Activated B cell treated with CpG ODN at 0.5 μM for 24 hours (primary cell): ENCODE measurements at regions of chr13 and their contacts with region 1.

Region 1: DNA sequence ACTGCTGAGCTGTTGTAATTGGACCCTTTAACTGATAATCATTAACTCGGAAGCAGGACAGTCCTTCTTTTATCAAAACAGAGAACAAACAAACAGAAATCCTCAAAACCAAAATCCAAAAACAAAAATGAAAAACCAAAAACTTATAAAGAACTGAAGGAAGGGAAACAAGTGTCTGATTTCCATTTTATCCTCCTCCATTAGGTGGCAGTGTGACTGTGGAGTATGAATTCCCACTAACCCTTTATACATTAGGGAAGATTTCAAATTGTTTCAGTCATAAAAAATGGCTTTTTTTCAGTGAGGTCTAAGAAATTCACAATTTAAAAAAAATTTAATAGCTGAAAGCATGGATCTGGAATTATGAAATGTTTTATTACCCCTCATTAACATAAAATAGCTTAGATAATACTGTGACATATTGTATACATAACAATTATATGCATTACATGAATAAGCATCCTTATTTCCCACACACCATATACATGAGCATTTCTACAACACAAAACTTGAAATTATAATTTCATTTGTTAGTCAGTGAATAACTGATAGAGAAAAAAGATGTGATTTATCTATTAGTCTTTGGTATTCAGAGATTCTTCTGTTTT is 1074.3 kb upstream of the PCDH9 start:
- DNase-seq: no peak
- ATAC-seq: no peak
- H3K4me3 Mint-ChIP-seq: no peak overlapping the region
- H3K27ac Mint-ChIP-seq: no peak overlapping the region
- H3K4me1 Mint-ChIP-seq: no peaks in the 10 kb centered on the region
- H3K27me3 Mint-ChIP-seq: no peaks in the 10 kb centered on the region
- CTCF ChIP-seq: no peak

Region 2: DNA sequence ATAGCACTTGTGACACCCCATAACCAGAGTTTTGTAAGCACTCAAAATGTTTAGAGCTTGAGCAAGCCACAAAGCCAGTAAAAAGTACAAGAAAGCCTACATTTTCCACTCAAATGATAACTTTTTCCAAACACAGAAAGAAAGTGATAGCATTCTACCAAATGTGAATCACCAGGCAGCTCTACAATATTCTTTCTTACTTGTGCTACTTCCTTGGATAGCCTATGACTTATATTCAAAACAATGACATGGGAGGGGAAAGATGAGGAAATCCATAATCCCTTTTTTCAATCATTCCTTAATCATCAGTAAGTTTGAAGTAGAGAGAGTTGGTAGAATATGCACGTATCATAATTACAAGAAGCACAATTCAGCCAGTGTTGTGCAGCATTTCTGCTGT is 423.5 kb before region 1 on chr13:
- CTCF ChIA-PET with region 1: no interaction called
- POLR2A ChIA-PET with region 1: no interaction called
- intact Hi-C with region 1: no loop called
- DNase-seq: no peak
- ATAC-seq: no peak
- H3K4me3 Mint-ChIP-seq: no peak overlapping the region
- H3K27ac Mint-ChIP-seq: no peak overlapping the region
- H3K4me1 Mint-ChIP-seq: no peaks in the 10 kb centered on the region
- H3K27me3 Mint-ChIP-seq: no peaks in the 10 kb centered on the region
- CTCF ChIP-seq: no peak

Region 3: DNA sequence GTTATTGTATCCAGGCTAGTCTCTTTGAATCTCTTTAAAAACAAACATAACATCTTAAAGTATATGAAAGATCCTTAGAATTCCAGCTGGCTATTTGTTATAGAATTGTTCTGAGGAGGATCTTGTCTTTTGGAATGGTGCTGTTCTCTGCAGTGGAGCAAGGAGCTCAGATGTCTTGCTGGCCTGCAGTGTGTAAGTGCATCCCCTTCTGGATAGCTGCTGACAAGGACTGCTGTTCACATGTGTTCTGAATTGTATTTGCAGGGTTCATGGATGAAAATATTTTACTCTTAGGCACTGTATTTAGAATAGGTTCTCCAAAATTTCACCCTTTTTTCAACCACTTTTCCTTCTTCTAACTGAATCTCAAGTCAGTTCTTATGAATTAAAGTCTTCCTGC is 13.6 kb before region 1 on chr13:
- CTCF ChIA-PET with region 1: no interaction called
- POLR2A ChIA-PET with region 1: no interaction called
- intact Hi-C with region 1: no loop called
- DNase-seq: no peak
- ATAC-seq: no peak
- H3K4me3 Mint-ChIP-seq: no peak overlapping the region
- H3K27ac Mint-ChIP-seq: no peak overlapping the region
- H3K4me1 Mint-ChIP-seq: no peaks in the 10 kb centered on the region
- H3K27me3 Mint-ChIP-seq: no peaks in the 10 kb centered on the region
- CTCF ChIP-seq: no peak

Region 4: GRCh38 chr13:68927387-68928026 is 623.1 kb after region 1 on chr13:
- CTCF ChIA-PET with region 1: interaction called, 5 read pairs
- POLR2A ChIA-PET with region 1: no interaction called
- intact Hi-C with region 1: loop called (anchors 1 kb)
- DNase-seq: no peak
- ATAC-seq: no peak
- H3K4me3 Mint-ChIP-seq: no peak overlapping the region
- H3K27ac Mint-ChIP-seq: no peak overlapping the region
- H3K4me1 Mint-ChIP-seq: no peaks in the 10 kb centered on the region
- H3K27me3 Mint-ChIP-seq: no peaks in the 10 kb centered on the region
- CTCF ChIP-seq: no peak

Region 5: GRCh38 chr13:69324090-69324886 is 1019.9 kb after region 1 on chr13:
- CTCF ChIA-PET with region 1: no interaction called
- POLR2A ChIA-PET with region 1: no interaction called
- intact Hi-C with region 1: loop called (anchors 1 kb)
- DNase-seq: no peak
- ATAC-seq: no peak
- H3K4me3 Mint-ChIP-seq: no peak overlapping the region
- H3K27ac Mint-ChIP-seq: no peak overlapping the region
- H3K4me1 Mint-ChIP-seq: no peaks in the 10 kb centered on the region
- H3K27me3 Mint-ChIP-seq: no peaks in the 10 kb centered on the region
- CTCF ChIP-seq: no peak

Region 6: GRCh38 chr13:69524459-69525155 is 1220.2 kb after region 1 on chr13:
- CTCF ChIA-PET with region 1: no interaction called
- POLR2A ChIA-PET with region 1: no interaction called
- intact Hi-C with region 1: loop called (anchors 2 kb)
- DNase-seq: no peak
- ATAC-seq: no peak
- H3K4me3 Mint-ChIP-seq: no peak overlapping the region
- H3K27ac Mint-ChIP-seq: no peak overlapping the region
- H3K4me1 Mint-ChIP-seq: no peaks in the 10 kb centered on the region
- H3K27me3 Mint-ChIP-seq: no peaks in the 10 kb centered on the region
- CTCF ChIP-seq: no peak